Activated CD4-positive, alpha-beta memory T cell treated with anti-CD3 and anti-CD28 coated beads for 36 hours (primary cell): ENCODE measurements at regions of chr3 and their contacts with region 1.

Region 1: GRCh38 chr3:156674046-156674910 is at the start of gene TIPARP:
- DNase-seq: peak; percentile 99
- H3K4me3 Mint-ChIP-seq: peak within 1 kb of the TSS; percentile 90
- H3K27ac Mint-ChIP-seq: peak within 1 kb of the TSS; percentile 94
- H3K4me1 Mint-ChIP-seq: peaks cover 36% of the 10 kb centered on the region
- H3K27me3 Mint-ChIP-seq: no peaks in the 10 kb centered on the region
- total RNA-seq, gene TIPARP: 15.7 to 17.7 TPM

Region 2: DNA sequence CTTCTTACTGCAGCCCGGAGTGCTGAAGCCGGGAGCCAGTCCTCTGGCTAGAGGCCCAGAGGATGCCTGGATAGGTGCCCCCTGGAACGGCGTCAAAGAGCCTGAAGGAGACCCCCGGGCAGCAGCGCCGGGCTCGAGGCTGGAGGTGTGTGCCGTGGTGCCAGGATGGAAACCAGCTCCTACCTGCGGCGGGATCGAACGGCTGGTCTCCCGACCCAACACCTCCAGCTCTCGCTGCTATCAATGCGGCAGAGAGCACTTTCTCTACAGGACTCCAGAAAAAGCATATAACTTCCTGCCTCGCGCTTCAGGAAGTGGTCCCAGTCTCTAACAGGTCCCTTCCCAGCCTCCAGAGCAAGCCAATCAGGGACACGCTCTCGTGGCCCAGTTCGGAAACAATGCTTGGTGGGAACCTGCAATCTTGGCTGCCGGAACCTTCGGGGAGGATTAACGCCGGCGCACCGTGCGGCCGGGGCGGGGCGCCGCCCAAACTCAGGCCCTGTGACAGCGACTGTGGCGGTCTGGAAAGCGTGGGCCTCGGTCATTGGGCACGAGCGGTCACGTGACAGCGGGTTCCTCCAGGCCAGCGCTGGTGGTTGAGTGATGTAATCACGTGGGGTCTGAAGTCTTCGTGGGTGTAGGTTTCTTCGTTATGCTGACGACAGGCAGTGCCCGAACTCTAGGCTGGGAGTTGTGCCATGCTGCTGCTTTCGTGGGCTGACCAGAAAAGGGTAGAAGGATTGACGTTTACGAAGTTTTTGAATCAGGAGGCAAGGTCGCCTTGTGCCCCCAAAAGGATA is 819.9 kb before region 1 on chr3 and contains the start of gene SLC33A1:
- CTCF ChIA-PET with region 1: no interaction called
- POLR2A ChIA-PET with region 1: no interaction called
- intact Hi-C with region 1: loop called (anchors 10 kb)
- DNase-seq: peak; percentile 99
- H3K4me3 Mint-ChIP-seq: peak within 1 kb of the TSS; percentile 97
- H3K27ac Mint-ChIP-seq: peak within 1 kb of the TSS; percentile 99
- H3K4me1 Mint-ChIP-seq: peaks cover 31% of the 10 kb centered on the region
- H3K27me3 Mint-ChIP-seq: no peaks in the 10 kb centered on the region
- total RNA-seq, gene SLC33A1: 20.5 to 23.6 TPM

Region 3: GRCh38 chr3:156519758-156520162 is 154.5 kb before region 1 on chr3:
- CTCF ChIA-PET with region 1: interaction called, 3 read pairs
- POLR2A ChIA-PET with region 1: no interaction called
- intact Hi-C with region 1: loop called (anchors 1 kb)
- DNase-seq: peak; percentile 41
- H3K4me3 Mint-ChIP-seq: no peak overlapping the region
- H3K27ac Mint-ChIP-seq: no peak overlapping the region
- H3K4me1 Mint-ChIP-seq: peaks cover 19% of the 10 kb centered on the region
- H3K27me3 Mint-ChIP-seq: peaks cover 9% of the 10 kb centered on the region

Region 4: GRCh38 chr3:156685198-156685597 is 10.9 kb after region 1 on chr3:
- CTCF ChIA-PET with region 1: interaction called, 6 read pairs
- POLR2A ChIA-PET with region 1: interaction called, 16 read pairs
- intact Hi-C with region 1: loop called (anchors 1 kb)
- DNase-seq: no peak
- H3K4me3 Mint-ChIP-seq: no peak overlapping the region
- H3K27ac Mint-ChIP-seq: peak overlapping the region; percentile 49
- H3K4me1 Mint-ChIP-seq: peaks cover 73% of the 10 kb centered on the region
- H3K27me3 Mint-ChIP-seq: no peaks in the 10 kb centered on the region

Region 5: GRCh38 chr3:157081681-157082210 is 407.5 kb after region 1 on chr3:
- CTCF ChIA-PET with region 1: interaction called, 5 read pairs
- POLR2A ChIA-PET with region 1: interaction called, 7 read pairs
- intact Hi-C with region 1: loop called (anchors 1 kb)
- DNase-seq: peak; percentile 90
- H3K4me3 Mint-ChIP-seq: no peak overlapping the region
- H3K27ac Mint-ChIP-seq: no peak overlapping the region
- H3K4me1 Mint-ChIP-seq: peaks cover 31% of the 10 kb centered on the region
- H3K27me3 Mint-ChIP-seq: no peaks in the 10 kb centered on the region

Region 6: DNA sequence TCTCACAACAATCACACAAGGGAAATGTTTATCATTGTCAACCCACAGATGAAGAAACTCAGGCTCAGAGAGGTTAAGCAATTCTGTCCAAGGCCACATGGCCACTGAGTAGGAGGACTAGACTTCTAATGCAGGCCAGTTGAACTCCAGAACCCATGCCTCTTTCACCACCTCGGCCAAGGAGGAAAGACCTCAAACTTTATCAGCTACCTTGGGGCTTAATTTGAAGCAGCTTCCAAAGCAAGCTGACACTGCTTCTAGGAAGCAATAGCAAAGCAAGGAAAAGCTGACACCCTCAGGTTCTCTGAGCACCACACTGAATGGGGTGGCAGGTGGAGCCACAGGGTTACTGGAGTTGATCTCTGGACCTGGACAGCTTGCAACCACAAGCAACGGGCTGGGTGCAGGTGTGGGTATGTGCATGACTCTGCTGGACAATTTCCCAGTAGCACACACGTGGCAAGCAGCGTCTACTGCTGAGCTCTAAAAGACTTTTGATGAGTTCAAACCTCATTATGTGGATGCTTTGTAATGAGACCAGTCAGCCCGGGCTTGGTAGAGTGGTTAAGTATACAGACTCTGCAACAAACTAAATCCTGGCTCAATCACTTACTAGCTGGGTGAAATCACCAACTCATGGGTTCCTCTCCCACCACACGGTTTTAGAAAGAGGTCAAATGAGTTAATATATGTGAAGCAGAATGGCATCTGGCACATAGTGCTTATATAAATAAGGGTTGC is 462.5 kb after region 1 on chr3:
- CTCF ChIA-PET with region 1: interaction called, 27 read pairs
- POLR2A ChIA-PET with region 1: interaction called, 5 read pairs
- intact Hi-C with region 1: no loop called
- DNase-seq: no peak
- H3K4me3 Mint-ChIP-seq: no peak overlapping the region
- H3K27ac Mint-ChIP-seq: no peak overlapping the region
- H3K4me1 Mint-ChIP-seq: peaks cover 40% of the 10 kb centered on the region
- H3K27me3 Mint-ChIP-seq: no peaks in the 10 kb centered on the region